ENCODE measurements at regions of chr1 and their contacts with region 1.

Region 1: GRCh38 chr1:27603681-27604578 is at the start of gene AHDC1:
- DNase-seq: peak; percentile 90 to 94 (median 91)
- H3K4me3 ChIP-seq: peak within 1 kb of the TSS; percentile 29 to 79
- H3K4me3 Mint-ChIP-seq: peak within 1 kb of the TSS; percentile 86 to 98 (median 92)
- H3K27ac ChIP-seq: peak within 1 kb of the TSS; percentile 63
- H3K27ac Mint-ChIP-seq: peak within 1 kb of the TSS; percentile 88 to 94 (median 92)
- H3K4me1 ChIP-seq: peaks cover 54% of the 10 kb centered on the region
- H3K4me1 Mint-ChIP-seq: peaks cover 16 to 66% (median 40%) of the 10 kb centered on the region in 4 donors
- H3K27me3 ChIP-seq: no peaks in the 10 kb centered on the region
- H3K27me3 Mint-ChIP-seq: no peaks in the 10 kb centered on the region
- total RNA-seq, gene AHDC1: 18.4 to 19.2 TPM

Region 2: GRCh38 chr1:26066857-26067256 is 1537.1 kb before region 1 on chr1:
- CTCF ChIA-PET with region 1: no interaction called
- POLR2A ChIA-PET with region 1: no interaction called
- intact Hi-C with region 1: no loop called
- DNase-seq: no peak
- H3K4me3 ChIP-seq: no peak overlapping the region
- H3K4me3 Mint-ChIP-seq: no peak overlapping the region
- H3K27ac ChIP-seq: no peak overlapping the region
- H3K27ac Mint-ChIP-seq: no peak overlapping the region
- H3K4me1 ChIP-seq: no peaks in the 10 kb centered on the region
- H3K4me1 Mint-ChIP-seq: no peaks in the 10 kb centered on the region
- H3K27me3 ChIP-seq: no peaks in the 10 kb centered on the region
- H3K27me3 Mint-ChIP-seq: peaks cover 5 to 20% of the 10 kb centered on the region in 2 donors

Region 3: DNA sequence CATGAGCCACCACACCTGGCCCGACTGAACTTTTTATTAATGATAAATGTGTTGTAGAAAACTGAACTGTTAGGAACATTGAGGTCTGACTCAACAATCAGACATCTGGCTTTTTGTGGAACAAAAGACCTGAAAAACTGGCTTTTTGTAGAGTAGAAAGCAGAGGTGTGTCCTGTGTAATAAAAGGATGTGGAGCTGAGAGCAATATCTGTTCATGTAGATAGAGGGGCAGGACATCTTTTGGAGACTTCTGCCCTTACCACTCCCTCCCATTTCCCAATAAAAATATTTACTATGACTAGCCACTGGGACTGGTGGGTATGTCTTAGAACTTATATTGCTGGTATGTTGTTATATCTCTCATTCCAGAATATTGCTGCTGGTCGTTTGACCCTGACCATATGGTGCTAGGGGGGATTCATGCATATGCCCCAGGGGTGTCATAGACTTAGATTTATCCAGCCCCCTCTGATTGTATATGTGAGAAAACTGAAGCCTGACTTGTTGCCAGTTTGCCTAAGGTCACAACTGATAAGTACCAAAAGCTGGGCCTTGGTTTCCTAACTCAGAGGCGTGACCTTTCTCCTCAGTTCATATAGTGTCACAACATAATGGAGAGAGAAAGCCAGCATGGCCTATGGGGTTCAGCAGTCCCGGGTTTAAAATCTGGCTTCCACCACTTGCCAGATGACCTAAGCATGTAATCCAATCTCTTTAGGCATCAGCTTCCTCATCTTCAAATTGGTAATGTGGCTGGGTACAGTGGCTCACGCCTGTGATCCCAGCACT is 849.6 kb before region 1 on chr1:
- CTCF ChIA-PET with region 1: no interaction called
- POLR2A ChIA-PET with region 1: no interaction called
- intact Hi-C with region 1: no loop called
- DNase-seq: no peak
- H3K4me3 ChIP-seq: no peak overlapping the region
- H3K4me3 Mint-ChIP-seq: no peak overlapping the region
- H3K27ac ChIP-seq: no peak overlapping the region
- H3K27ac Mint-ChIP-seq: peak overlapping the region in 4 of 7 donors; percentile 27 to 50 (median 36)
- H3K4me1 ChIP-seq: peaks cover 57% of the 10 kb centered on the region
- H3K4me1 Mint-ChIP-seq: peaks cover 37 to 71% (median 52%) of the 10 kb centered on the region in 4 donors
- H3K27me3 ChIP-seq: no peaks in the 10 kb centered on the region
- H3K27me3 Mint-ChIP-seq: no peaks in the 10 kb centered on the region

Region 4: GRCh38 chr1:27402349-27402754 is 201.6 kb before region 1 on chr1:
- CTCF ChIA-PET with region 1: interaction called, 75 read pairs
- POLR2A ChIA-PET with region 1: interaction called, 3 read pairs
- intact Hi-C with region 1: loop called (anchors 1 kb)
- DNase-seq: no peak
- H3K4me3 ChIP-seq: no peak overlapping the region
- H3K4me3 Mint-ChIP-seq: no peak overlapping the region
- H3K27ac ChIP-seq: no peak overlapping the region
- H3K27ac Mint-ChIP-seq: peak overlapping the region in 3 of 7 donors; percentile 3 to 79 (median 23)
- H3K4me1 ChIP-seq: no peaks in the 10 kb centered on the region
- H3K4me1 Mint-ChIP-seq: peaks cover 3 to 18% (median 9%) of the 10 kb centered on the region in 4 donors
- H3K27me3 ChIP-seq: no peaks in the 10 kb centered on the region
- H3K27me3 Mint-ChIP-seq: no peaks in the 10 kb centered on the region

Region 5: GRCh38 chr1:27525296-27526272 is 78.3 kb before region 1 on chr1:
- CTCF ChIA-PET with region 1: interaction called, 42 read pairs
- POLR2A ChIA-PET with region 1: interaction called, 35 read pairs
- intact Hi-C with region 1: loop called (anchors 1 kb)
- DNase-seq: peak; percentile 28 to 54 (median 43)
- H3K4me3 ChIP-seq: peak overlapping the region; percentile 22 to 50
- H3K4me3 Mint-ChIP-seq: peak overlapping the region; percentile 36 to 92 (median 77)
- H3K27ac ChIP-seq: peak overlapping the region; percentile 62
- H3K27ac Mint-ChIP-seq: peak overlapping the region; percentile 77 to 96 (median 93)
- H3K4me1 ChIP-seq: peaks cover 81% of the 10 kb centered on the region
- H3K4me1 Mint-ChIP-seq: peaks cover 53 to 78% (median 66%) of the 10 kb centered on the region in 4 donors
- H3K27me3 ChIP-seq: no peaks in the 10 kb centered on the region
- H3K27me3 Mint-ChIP-seq: no peaks in the 10 kb centered on the region

Region 6: GRCh38 chr1:27542408-27543273 is 61.3 kb before region 1 on chr1:
- CTCF ChIA-PET with region 1: no interaction called
- POLR2A ChIA-PET with region 1: no interaction called
- intact Hi-C with region 1: no loop called
- DNase-seq: peak in 1 of 5 donors; percentile 33
- H3K4me3 ChIP-seq: no peak overlapping the region
- H3K4me3 Mint-ChIP-seq: no peak overlapping the region
- H3K27ac ChIP-seq: no peak overlapping the region
- H3K27ac Mint-ChIP-seq: peak overlapping the region in 3 of 7 donors; percentile 15 to 82 (median 77)
- H3K4me1 ChIP-seq: peaks cover 4% of the 10 kb centered on the region
- H3K4me1 Mint-ChIP-seq: peaks cover 2 to 13% (median 11%) of the 10 kb centered on the region in 4 donors
- H3K27me3 ChIP-seq: no peaks in the 10 kb centered on the region
- H3K27me3 Mint-ChIP-seq: no peaks in the 10 kb centered on the region

Region 7: GRCh38 chr1:27568300-27569087 is 35.4 kb before region 1 on chr1:
- CTCF ChIA-PET with region 1: interaction called, 13 read pairs
- POLR2A ChIA-PET with region 1: interaction called, 11 read pairs
- intact Hi-C with region 1: loop called (anchors 1 kb)
- DNase-seq: peak; percentile 92 to 94 (median 93)
- H3K4me3 ChIP-seq: peak overlapping the region in 1 of 2 donors; percentile 55
- H3K4me3 Mint-ChIP-seq: peak overlapping the region; percentile 66 to 92 (median 84)
- H3K27ac ChIP-seq: peak overlapping the region; percentile 60
- H3K27ac Mint-ChIP-seq: peak overlapping the region; percentile 71 to 92 (median 86)
- H3K4me1 ChIP-seq: peaks cover 27% of the 10 kb centered on the region
- H3K4me1 Mint-ChIP-seq: peaks cover 16 to 39% (median 22%) of the 10 kb centered on the region in 4 donors
- H3K27me3 ChIP-seq: no peaks in the 10 kb centered on the region
- H3K27me3 Mint-ChIP-seq: no peaks in the 10 kb centered on the region

Region 8: DNA sequence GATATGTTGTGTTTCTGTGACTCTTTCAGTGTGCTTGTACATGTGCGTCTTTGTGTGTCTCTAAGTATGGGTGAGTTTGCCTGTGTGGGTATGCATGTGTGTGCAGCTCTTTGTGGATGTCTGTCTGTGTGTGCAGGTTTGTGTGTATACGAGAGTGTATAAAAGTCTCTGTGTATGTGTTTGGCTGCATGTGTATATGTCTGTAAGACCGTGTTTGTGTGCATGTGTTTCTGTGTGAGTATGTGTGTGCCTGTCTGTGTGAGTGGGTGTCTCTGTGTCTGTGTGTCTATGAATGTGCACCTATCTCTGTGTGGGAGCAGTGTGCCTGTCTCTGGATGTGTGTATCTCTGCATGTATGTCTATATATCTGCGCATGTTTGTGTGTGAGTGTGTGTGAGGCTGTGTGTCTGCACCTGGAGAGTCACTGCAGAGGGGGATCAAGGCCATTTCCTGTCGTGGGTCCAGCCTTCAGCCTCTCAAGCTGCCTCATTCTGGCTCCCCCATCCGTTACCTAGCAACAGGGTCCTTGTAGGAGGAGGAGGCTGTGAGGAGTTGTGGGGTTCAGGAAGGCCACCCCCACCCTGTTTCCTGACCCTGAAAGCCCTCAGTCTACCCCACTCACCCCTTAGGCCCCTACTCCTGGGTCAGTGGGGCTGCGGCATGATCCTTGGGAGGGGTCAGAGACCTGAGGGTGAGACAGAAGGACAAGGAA is 20.7 kb after region 1 on chr1:
- CTCF ChIA-PET with region 1: interaction called, 10 read pairs
- POLR2A ChIA-PET with region 1: interaction called, 14 read pairs
- intact Hi-C with region 1: no loop called
- DNase-seq: no peak
- H3K4me3 ChIP-seq: no peak overlapping the region
- H3K4me3 Mint-ChIP-seq: no peak overlapping the region
- H3K27ac ChIP-seq: no peak overlapping the region
- H3K27ac Mint-ChIP-seq: no peak overlapping the region
- H3K4me1 ChIP-seq: peaks cover 36% of the 10 kb centered on the region
- H3K4me1 Mint-ChIP-seq: peaks cover 15 to 24% (median 18%) of the 10 kb centered on the region in 4 donors
- H3K27me3 ChIP-seq: no peaks in the 10 kb centered on the region
- H3K27me3 Mint-ChIP-seq: no peaks in the 10 kb centered on the region

Region 9: DNA sequence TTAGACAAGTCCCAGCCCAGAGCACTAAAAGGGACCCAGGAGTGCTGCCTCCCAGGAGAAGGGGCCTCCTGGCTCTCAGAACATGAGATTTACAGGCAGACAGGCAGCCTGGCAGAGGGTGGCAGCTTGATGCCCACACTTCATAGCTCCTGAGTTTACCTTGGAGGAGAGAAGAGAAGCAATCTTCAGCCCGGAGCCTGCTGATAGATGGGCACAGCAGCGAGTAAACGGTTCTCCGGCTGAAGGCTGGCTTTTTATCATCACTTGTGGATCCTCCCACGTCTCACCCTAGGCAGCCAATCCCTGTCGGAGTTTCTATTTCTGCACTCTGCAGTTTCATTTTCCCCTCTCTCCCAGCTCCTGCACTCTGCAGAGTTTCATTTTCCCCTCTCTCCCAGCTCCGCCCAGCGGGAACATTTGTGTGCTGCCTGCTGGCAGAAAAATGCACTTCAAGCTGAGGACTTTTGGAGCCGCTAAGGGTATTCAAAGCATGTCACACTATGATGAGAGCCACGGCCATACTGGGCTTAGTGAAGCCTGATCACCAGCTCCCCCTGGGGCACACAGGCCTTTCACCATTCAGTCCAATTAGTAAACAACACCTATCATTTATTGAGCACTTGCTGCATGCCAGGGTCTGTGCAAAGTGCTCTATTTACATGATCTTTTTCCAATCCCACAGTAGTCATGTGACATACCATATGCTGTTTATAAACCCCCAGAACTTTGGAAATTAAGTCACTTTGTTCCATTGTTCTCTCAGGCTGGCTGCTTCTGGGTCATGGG is 68.2 kb after region 1 on chr1 and contains the start of gene IFI6:
- CTCF ChIA-PET with region 1: interaction called, 550 read pairs
- POLR2A ChIA-PET with region 1: interaction called, 26 read pairs
- intact Hi-C with region 1: no loop called
- DNase-seq: peak; percentile 82 to 92 (median 82)
- H3K4me3 ChIP-seq: peak within 1 kb of the TSS; percentile 63 to 65
- H3K4me3 Mint-ChIP-seq: peak within 1 kb of the TSS; percentile 91 to 99 (median 96)
- H3K27ac ChIP-seq: peak within 1 kb of the TSS; percentile 85
- H3K27ac Mint-ChIP-seq: peak within 1 kb of the TSS; percentile 90 to 99 (median 97)
- H3K4me1 ChIP-seq: peaks cover 41% of the 10 kb centered on the region
- H3K4me1 Mint-ChIP-seq: peaks cover 24 to 40% (median 33%) of the 10 kb centered on the region in 4 donors
- H3K27me3 ChIP-seq: no peaks in the 10 kb centered on the region
- H3K27me3 Mint-ChIP-seq: no peaks in the 10 kb centered on the region
- total RNA-seq, gene IFI6: 23.0 to 24.9 TPM

Region 10: DNA sequence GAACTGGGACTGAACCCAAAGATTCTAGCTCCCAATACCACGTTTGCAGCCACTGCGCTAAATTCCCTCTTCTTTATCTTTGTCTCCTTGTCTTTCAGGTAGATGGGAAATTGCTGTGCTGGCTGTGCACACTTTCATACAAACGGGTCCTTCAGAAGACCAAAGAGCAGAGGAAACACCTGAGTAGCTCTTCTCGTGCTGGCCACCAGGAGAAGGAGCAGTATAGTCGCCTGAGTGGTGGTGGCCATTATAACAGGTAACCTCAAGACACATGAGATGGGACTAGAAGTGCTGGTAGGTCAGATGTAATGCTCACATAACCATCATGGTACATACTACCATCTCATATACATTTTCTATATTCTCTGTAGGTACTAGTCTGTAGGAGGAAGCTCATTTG is 140.6 kb after region 1 on chr1:
- CTCF ChIA-PET with region 1: no interaction called
- POLR2A ChIA-PET with region 1: no interaction called
- intact Hi-C with region 1: no loop called
- DNase-seq: no peak
- H3K4me3 ChIP-seq: no peak overlapping the region
- H3K4me3 Mint-ChIP-seq: no peak overlapping the region
- H3K27ac ChIP-seq: no peak overlapping the region
- H3K27ac Mint-ChIP-seq: no peak overlapping the region
- H3K4me1 ChIP-seq: no peaks in the 10 kb centered on the region
- H3K4me1 Mint-ChIP-seq: peaks cover 0 to 10% (median under 1%) of the 10 kb centered on the region in 4 donors
- H3K27me3 ChIP-seq: no peaks in the 10 kb centered on the region
- H3K27me3 Mint-ChIP-seq: no peaks in the 10 kb centered on the region

Measured in CD4-positive, alpha-beta memory T cell (primary cell).